ENCODE measurements at regions of chr2 and their contacts with region 1.

Region 1: GRCh38 chr2:156548413-156548812 is 112.2 kb downstream of the GPD2 start:
- DNase-seq: no peak
- CTCF ChIP-seq: no peak

Region 2: GRCh38 chr2:156561326-156561725 is 12.9 kb after region 1 on chr2:
- CTCF ChIA-PET with region 1: interaction called, 11 read pairs
- POLR2A ChIA-PET with region 1: no interaction called
- DNase-seq: no peak
- CTCF ChIP-seq: no peak

Region 3: DNA sequence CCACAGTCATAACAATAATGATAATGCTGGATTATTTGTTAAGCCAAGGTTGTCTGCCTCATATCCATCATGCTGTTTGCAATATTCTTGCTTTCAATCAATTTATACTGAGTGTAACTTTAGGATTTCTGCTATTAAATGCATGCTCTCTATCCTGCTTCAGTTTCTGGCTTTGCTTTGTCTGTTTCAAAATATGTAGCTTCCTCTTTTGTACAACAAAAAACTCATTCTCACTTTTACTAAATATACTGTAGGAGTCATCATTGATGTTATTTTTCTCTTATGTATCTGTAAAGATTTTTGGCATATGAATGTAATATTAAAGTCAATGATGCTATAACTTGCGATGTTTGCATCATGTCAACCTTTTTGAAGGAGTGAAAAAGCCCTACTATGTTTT is 37.0 kb after region 1 on chr2:
- CTCF ChIA-PET with region 1: no interaction called
- POLR2A ChIA-PET with region 1: no interaction called
- DNase-seq: no peak
- CTCF ChIP-seq: no peak

Region 4: DNA sequence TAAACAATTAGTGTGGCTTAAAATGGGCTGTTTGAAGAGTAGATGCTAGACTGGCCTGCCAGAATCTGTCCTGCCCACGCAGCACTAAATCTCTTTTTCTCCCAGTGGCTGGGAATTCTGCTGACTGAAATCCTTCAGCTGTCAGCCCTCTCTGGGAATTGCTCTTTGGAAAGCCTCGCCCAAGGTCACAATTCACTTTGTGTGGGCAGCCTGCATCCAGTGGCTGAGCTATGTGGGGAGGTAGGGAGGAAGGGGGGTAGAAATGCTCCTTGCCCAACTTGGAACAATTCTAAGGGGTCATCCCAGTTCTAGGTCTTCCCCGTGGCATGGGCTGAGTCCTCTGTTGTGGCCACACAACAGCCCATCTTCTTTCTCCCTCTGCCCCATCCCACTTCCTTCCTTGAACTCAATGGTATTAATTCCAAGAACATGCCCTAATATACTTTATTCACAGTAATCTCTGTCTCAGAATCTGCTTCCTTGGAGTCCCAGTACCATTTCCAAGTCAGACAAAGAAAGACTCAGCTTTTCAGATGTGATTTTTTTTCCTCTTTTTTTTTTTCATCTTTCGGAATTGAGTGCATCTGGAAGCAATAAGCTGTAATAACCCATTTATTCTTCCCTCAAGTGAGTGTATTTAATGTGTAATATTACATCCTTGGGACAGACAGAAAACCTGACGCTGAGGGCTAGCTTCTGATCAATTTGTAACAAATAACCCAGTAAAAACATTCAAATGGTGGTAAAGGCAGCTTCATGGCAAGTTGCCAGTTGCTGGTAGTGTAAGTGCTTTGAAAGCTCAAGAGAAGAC is 77.2 kb after region 1 on chr2:
- CTCF ChIA-PET with region 1: no interaction called
- POLR2A ChIA-PET with region 1: no interaction called
- DNase-seq: no peak
- CTCF ChIP-seq: no peak

Region 5: GRCh38 chr2:157107877-157108276 is 559.5 kb after region 1 on chr2:
- CTCF ChIA-PET with region 1: no interaction called
- POLR2A ChIA-PET with region 1: no interaction called
- DNase-seq: no peak
- CTCF ChIP-seq: no peak